ENCODE measurements at regions of chrX and their contacts with region 1.

Region 1: GRCh38 chrX:109952984-109953905 is 49.7 kb upstream of the TMEM164 start:
- DNase-seq: no peak
- H3K4me3 ChIP-seq: no peak overlapping the region
- H3K27ac ChIP-seq: no peak overlapping the region
- H3K4me1 ChIP-seq: peaks cover 8% of the 10 kb centered on the region
- H3K27me3 ChIP-seq: no peaks in the 10 kb centered on the region
- CTCF ChIP-seq: no peak

Region 2: DNA sequence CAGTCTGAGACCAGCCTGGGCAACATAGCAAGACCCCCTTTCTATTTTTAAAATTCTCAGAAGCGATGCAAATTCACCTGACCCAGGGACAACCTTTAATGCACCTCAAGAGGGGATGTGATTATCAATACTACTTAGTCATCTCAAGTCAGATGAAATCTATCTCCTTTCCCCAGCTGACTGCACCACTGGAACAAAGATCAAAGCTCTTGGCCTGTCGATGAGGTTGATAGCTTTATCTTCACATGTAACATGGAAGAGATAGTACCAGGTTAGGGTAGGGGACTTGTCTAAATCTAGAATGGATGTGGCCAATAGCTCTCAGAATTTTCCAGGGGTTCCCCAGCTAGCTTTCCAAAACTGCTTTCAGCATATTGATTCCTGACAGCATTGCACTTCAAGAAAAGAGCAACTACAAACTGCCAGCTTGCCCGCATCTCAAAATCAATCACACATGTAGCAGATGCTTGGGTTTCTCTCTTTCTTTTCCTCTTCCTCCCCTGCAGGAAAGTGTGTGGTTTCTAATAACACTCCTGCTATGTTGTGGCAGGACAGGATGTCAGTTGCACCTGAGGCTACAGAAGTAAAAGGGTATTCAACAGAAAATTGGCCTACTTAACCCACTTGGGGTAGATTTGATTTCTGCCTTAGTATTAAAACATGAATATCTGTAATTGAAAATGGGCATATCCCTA is 37.5 kb after region 1 on chrX:
- CTCF ChIA-PET with region 1: no interaction called
- dilution Hi-C with region 1: no loop called
- in situ Hi-C with region 1: no loop called
- intact Hi-C with region 1: loop called (anchors 5 kb)
- DNase-seq: no peak
- H3K4me3 ChIP-seq: no peak overlapping the region
- H3K27ac ChIP-seq: no peak overlapping the region
- H3K4me1 ChIP-seq: peaks cover 4% of the 10 kb centered on the region
- H3K27me3 ChIP-seq: no peaks in the 10 kb centered on the region
- CTCF ChIP-seq: no peak